ENCODE measurements at regions of chr7 and their contacts with region 1.

Region 1: DNA sequence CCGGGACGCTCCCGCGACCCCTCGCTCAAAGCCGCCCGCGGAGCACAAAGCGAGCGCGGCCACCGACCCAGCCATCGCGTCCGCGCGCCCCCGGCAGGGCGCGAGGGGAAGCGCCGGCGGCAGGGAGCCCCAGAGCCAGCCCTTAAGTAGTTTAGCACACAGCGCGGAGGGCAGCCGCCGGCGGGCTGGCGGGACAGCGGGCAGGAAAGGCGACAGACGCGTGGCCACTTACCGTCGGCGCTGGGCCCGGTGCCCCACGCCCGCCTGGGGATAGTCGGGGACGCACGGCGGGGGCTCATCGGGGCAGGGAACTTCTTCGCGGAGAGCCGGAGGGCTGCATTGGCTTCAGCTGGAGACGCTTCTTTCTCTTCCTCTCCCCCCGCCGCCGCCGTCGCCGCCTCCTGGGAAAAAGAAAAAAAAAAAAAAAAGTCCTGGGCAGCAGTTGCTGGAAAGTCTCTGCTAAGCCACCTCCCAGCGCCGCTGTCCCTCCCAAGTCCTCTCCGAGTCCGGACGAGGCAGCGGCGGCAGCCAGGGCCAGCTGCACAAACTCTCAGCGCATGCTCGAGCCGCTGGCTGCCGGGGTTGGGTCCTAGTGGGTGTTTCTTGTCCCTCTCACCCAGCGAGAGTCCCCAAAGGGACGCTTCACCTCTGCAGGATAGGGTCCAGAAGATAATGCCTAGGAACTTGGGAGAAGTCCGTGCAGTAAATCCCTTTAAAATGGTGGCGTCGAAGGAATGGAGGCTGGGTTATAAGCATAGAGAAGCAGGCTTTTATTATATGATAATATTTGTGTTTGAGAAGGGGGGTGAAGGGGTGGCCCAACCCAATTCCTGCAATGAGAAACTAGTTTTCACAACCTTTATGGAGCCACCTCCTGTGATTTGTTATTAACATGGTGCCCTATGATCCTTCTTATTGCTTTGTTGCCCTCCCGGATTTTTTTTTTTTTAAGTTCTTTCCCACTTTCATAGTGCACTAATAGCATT is at the start of gene TSPAN12:
- DNase-seq: peak; percentile 30 to 93 (median 49)

Region 2: GRCh38 chr7:120703585-120704240 is 154.2 kb before region 1 on chr7:
- intact Hi-C with region 1: no loop called
- DNase-seq: peak in 1 of 10 donors; percentile 48

Region 3: DNA sequence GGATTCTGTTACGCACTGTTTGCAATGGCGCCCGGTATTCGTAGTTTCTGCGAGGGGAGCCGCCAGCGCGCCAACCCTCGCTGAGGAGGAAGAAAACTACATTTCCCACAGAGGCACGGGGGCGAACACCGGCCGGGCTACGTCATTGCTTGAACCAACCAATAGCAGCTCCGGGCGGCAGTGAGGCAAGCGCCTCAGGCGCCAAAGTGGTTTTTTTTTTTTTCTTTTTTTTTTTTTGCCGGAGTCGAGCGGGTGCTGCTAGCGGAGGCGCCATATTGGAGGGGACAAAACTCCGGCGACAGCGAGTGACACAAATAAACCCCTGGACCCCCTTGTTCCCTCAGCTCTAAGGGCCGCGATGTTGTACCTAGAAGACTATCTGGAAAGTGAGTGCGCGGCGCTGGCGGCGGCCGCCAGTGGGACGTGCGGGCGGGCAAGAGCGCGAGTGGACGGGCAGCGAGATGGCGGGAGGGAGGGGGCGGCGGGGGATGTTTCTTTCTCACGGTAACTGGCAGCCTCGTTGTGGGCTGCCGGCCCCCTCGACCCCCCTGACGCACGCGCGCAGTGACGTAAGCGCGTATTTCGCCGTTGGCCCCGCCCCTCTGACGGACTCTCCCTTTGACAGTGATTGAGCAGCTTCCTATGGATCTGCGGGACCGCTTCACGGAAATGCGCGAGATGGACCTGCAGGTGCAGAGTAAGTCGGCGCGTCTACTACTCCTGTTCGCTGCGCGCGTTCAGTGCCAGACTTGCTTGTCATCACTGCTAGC is 92.8 kb after region 1 on chr7 and contains the start of gene ING3:
- intact Hi-C with region 1: loop called (anchors 5 kb)
- DNase-seq: peak; percentile 96 to 100 (median 97)

Measured in posterior cingulate gyrus (tissue), 11 donors.